Heart left ventricle (tissue), 16 donors: ENCODE measurements at regions of chr2 and their contacts with region 1.

Region 1: DNA sequence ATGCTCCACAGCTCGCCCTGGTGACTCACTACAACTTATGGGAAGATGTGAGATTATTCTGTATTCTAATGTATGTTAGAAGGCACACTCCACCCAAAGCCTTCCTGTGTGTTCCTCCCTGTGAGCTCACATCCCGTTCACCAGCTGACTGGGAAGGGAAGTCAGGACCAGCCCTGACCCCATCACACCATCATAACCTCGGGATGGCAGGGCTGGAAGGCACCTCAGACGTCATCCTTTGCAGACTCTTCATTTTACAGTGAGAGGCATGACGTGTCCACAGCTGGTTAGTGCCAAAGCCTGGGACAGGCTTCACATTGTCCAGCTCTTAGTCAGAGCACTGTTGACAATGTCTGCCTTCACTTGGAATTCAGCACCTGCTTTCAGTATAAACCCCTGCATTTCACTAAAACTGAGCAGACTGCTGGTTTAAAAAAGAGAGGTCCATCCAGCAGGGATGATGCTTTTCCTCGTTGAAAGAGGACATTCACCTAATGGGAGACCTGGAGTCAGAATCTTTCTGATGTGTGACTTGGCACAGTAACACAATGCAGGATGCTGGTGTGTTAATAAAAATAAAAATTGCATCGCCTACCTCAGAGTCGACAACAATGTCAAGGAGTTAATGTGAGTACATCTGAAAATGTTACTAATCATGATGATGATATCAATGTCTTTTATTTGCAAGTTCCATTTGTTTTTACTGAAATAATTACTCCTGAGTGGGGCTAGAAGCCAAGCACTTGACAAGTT is 418.0 kb upstream of the TNP1 start:
- DNase-seq: peak in 4 of 5 donors; percentile 12 to 75 (median 41)
- ATAC-seq: peak in 3 of 4 donors; percentile 78 to 84 (median 78)
- H3K4me3 ChIP-seq: no peak overlapping the region
- H3K27ac ChIP-seq: peak overlapping the region in 3 of 12 donors; percentile 29 to 57 (median 47)
- H3K4me1 ChIP-seq: peaks cover 0 to 48% (median 30%) of the 10 kb centered on the region in 12 donors
- H3K27me3 ChIP-seq: no peaks in the 10 kb centered on the region
- CTCF ChIP-seq: no peak
- POLR2A ChIP-seq: no peak

Region 2: GRCh38 chr2:217075268-217076057 is 202.4 kb before region 1 on chr2:
- intact Hi-C with region 1: loop called in 1 of 10 experiments (anchors 10 kb)
- DNase-seq: peak; percentile 52 to 80 (median 72)
- ATAC-seq: peak; percentile 63 to 96 (median 92)
- H3K4me3 ChIP-seq: no peak overlapping the region
- H3K27ac ChIP-seq: peak overlapping the region; percentile 6 to 87 (median 66)
- H3K4me1 ChIP-seq: peaks cover 0 to 32% (median 19%) of the 10 kb centered on the region in 12 donors
- H3K27me3 ChIP-seq: no peaks in the 10 kb centered on the region
- CTCF ChIP-seq: no peak
- POLR2A ChIP-seq: no peak

Region 3: DNA sequence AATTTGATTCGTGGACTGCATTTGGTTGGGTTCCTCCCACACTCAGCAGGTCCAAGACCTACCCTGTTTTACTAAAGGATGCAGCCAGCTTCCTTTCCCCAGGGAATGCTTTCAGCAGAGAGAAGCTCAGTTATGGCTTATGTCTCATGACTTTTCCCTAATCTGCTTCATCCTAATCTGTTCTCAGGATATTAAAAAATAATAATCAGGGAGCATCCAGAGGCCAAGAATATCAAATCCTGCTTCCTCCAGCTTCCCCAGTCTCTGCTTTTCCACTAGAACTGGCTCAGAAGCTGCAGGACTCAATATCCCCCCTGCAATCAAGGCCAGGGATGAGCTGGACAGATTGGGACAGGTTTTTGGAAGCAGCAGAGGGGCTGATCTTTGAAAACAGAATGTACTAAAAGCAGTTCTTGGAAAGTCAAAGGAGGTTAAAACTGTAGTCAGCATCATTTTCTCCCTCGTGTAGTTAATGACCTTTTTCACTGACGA is 91.1 kb before region 1 on chr2:
- intact Hi-C with region 1: loop called in 1 of 10 experiments (anchors 5 kb)
- DNase-seq: peak in 4 of 5 donors; percentile 46 to 74 (median 66)
- ATAC-seq: peak; percentile 83 to 91 (median 88)
- H3K4me3 ChIP-seq: no peak overlapping the region
- H3K27ac ChIP-seq: peak overlapping the region in 10 of 12 donors; percentile 24 to 77 (median 48)
- H3K4me1 ChIP-seq: peaks cover 0 to 22% (median 8%) of the 10 kb centered on the region in 12 donors
- H3K27me3 ChIP-seq: peaks cover 0 to 3% (median 0%) of the 10 kb centered on the region in 9 donors
- CTCF ChIP-seq: no peak
- POLR2A ChIP-seq: no peak

Region 4: DNA sequence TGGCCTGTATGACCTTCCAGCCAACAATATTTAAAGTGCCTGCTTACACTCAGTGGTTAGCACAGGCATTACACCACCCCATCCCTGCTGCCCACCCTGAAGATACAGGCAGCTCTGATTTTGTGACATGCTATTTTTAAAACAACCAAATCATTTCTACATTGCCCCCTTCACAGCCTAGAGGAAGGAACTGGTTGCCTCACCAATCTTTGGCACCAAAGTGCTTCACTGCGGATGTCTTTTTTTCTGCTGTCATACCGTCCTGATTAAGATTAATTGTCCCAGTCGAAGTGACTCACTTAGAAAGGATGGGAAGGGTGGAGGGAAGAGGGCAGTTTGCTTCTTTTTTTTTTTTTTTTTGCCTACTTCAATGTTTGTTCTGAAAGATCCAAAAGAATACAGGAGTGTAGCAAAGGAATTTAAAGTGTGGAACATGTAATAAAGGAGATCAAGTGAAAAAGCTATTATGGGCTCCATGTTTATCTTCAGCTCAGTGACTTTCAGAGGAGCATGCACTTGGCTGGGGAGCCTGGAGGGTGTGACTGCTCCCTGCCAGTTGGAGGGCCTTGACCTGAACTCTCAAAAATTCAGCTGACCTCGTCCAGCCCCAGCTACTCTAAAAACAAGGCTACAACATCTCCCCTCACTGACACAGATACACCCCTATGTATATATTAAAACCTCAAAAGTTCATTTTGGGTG is 83.1 kb after region 1 on chr2:
- intact Hi-C with region 1: no loop called
- DNase-seq: peak in 2 of 5 donors; percentile 26 to 44
- ATAC-seq: peak; percentile 56 to 78 (median 71)
- H3K4me3 ChIP-seq: no peak overlapping the region
- H3K27ac ChIP-seq: peak overlapping the region in 11 of 12 donors; percentile 7 to 81 (median 62)
- H3K4me1 ChIP-seq: peaks cover 0 to 40% (median 30%) of the 10 kb centered on the region in 12 donors
- H3K27me3 ChIP-seq: no peaks in the 10 kb centered on the region
- CTCF ChIP-seq: no peak
- POLR2A ChIP-seq: no peak